Left cardiac atrium (tissue), 4 donors: ENCODE measurements at regions of chr6 and their contacts with region 1.

Region 1: GRCh38 chr6:149840345-149841075 is 23.6 kb downstream of the LRP11 start:
- DNase-seq: peak; percentile 87
- ATAC-seq: peak; percentile 96 to 97

Region 2: DNA sequence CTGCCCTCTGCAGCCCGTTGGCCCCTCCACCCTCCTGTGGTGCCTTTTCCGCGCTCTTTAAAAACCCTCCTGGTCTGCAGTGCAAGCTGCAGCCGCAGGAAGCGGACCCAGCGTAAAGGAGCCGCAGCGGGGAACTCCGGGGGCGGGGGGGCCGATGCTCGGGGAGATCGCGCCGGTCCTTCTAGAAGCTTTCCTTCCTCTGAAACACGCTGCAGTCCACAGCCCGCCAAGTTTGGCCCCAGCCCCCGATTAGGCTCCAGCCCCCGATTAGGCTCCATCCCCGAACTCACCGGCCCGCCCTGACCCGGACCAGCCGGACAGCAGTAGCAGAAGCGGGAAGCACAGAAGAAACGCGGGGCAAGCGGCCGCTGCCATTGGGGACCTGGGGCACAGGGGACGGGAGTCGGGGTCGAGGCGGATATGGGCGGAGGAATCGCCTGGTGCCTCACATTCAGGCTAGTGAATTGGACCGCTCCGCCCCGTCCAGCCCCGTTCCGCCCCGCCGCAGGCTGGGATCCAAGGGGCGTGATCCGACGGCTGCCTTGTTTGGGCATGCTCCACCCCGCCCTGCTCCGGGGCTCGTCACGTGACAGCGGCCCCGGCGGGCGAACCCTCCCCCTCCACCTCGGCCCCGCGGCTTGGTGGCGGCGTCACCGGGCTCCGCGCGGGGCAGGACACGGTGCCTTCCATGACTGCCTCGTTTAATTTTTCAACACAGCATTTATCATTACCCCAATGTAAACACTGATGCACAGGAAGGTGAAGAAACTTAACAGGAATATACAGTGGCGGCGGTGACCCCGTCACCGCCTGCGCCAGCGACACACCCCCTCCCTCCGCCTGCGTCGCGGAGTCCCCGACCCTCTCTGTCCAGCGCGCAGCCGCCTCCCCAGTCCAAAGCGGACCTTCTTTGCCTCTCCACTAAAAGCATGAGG is 164.5 kb after region 1 on chr6:
- intact Hi-C with region 1: loop called in 1 of 2 experiments (anchors 10 kb)
- DNase-seq: peak; percentile 95
- ATAC-seq: peak; percentile 98 to 99